ENCODE measurements at regions of chr9 and their contacts with region 1.

Region 1: GRCh38 chr9:89549031-89549644 is 51.2 kb upstream of the SEMA4D start:
- DNase-seq: peak; percentile 58 to 82
- ATAC-seq: peak; percentile 96 to 99
- H3K4me3 ChIP-seq: no peak overlapping the region
- H3K27ac ChIP-seq: no peak overlapping the region
- H3K4me1 ChIP-seq: no peaks in the 10 kb centered on the region
- CTCF ChIP-seq: peak; percentile 82
- EP300 ChIP-seq: no peak
- POLR2A ChIP-seq: no peak
- RAD21 ChIP-seq: peak; percentile 71 to 74

Region 2: DNA sequence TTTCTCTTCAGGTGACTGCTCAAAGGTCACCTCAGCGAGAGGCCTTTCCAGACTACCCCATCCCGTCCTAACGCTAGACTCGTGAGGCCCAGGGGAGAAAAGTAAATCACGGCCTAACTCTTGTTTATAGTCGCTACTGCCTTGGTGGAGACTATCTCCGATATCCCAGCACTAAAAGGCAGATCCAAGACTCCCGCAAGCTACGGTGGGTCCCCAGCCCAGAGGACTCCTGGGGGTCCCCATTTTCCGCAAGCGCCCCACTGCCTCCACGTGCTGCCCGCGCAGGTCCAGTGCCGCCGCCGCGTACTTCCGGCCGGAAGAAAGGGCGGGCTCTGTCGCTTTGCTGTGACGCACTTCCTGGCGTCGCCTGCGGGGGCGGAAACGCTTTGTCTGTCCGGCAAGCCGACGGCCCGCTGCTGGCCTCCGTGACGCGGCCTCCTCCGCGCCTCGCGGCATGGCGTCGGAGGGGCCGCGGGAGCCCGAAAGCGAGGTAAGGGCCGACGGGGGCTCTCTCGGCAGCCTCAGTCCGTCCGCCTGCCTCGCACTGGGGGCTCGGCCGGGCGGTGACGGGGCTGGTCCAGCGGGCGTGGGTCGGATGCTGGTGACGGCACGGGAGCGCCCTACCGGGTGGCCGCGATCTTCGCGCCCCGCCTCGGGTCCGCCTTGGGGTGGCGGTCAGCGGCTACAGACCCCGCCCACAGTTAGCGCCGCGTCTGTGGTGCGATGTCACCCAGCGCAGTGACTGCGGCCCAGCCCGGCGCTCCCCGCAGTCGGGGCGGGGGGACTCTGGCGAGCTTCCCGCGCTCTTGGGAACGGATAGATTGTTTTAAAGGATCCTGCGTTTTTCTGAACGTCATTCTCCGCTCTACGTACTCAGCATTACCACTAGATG is 230.8 kb before region 1 on chr9 and contains the start of gene SECISBP2:
- CTCF ChIA-PET with region 1: interaction called, 10 read pairs
- POLR2A ChIA-PET with region 1: interaction called, 7 read pairs
- DNase-seq: peak; percentile 77 to 96
- ATAC-seq: peak; percentile 94 to 95
- H3K4me3 ChIP-seq: peak within 1 kb of the TSS; percentile 55
- H3K27ac ChIP-seq: peak within 1 kb of the TSS; percentile 96 to 98
- H3K4me1 ChIP-seq: peaks cover 56% of the 10 kb centered on the region
- CTCF ChIP-seq: peak; percentile 80; the same call in 2 of the 3 replicates
- EP300 ChIP-seq: no peak; a peak in 1 of 5 replicates
- POLR2A ChIP-seq: peak; percentile 74
- RAD21 ChIP-seq: peak in 1 of 2 experiments; percentile 41; a peak in 4 of 5 replicates
- polyA plus RNA-seq, gene SECISBP2: 39.0 and 43.4 TPM in 2 replicates

Region 3: DNA sequence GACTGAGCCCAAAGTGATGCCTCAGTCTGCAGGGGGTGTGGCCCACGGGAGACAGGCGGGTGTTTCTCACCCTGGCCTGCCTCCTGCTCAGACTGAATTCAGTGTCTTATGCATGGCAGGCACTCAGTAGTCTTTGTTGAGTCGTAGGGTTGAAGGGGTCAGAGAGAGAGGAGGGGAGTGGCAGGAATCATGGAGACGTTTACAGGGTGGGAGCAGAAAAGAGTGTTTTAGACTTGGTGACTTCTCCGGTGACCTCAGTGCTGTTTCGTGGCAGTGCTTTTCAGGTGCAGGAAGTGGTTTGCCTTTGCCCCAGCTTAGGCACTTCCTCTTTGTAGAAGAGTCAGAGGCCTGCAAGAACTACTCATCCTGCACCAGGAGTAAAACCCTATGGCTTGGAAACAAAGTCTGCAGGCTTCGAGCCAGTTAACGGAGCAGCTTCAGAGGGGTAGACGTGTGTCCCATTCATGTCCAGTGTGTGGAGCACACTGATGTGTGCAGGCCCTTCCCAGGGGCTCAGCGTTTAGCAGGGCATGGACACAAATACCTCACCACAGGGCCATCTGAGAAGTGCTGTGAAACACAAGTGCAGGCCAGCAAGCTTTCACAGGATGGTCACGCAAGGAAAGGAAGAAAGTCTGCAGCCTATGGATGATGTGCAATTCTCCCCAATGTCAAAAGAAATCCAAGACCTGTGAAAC is 26.7 kb before region 1 on chr9:
- CTCF ChIA-PET with region 1: interaction called, 16 read pairs
- POLR2A ChIA-PET with region 1: no interaction called
- DNase-seq: no peak
- ATAC-seq: no peak
- H3K4me3 ChIP-seq: no peak overlapping the region
- H3K27ac ChIP-seq: no peak overlapping the region
- H3K4me1 ChIP-seq: no peaks in the 10 kb centered on the region; the same call in 2 of the 3 replicates
- CTCF ChIP-seq: no peak
- EP300 ChIP-seq: no peak
- POLR2A ChIP-seq: no peak
- RAD21 ChIP-seq: no peak

Region 4: DNA sequence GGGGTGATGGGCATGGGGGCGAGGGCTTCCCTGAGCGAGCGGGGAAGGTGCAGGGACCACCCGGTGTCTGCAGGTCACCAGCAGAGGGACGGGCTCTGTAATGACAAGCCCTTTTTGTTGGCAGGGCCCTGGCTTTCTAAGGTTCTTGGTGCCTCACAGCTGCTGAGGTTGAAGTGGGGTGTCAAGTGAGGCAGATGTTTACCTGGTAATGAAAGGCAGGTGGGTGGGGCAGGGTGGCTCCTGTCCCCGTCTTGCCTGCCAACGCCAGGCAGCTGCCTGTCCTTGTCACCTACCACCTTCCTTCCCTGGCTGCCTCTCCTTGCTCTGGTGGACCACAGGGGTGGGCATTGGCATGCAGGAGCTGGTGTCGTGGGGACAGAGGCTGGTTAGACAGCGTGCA is 10.3 kb before region 1 on chr9:
- CTCF ChIA-PET with region 1: interaction called, 26 read pairs
- POLR2A ChIA-PET with region 1: no interaction called
- DNase-seq: no peak
- ATAC-seq: no peak
- H3K4me3 ChIP-seq: no peak overlapping the region
- H3K27ac ChIP-seq: no peak overlapping the region
- H3K4me1 ChIP-seq: peaks cover 5% of the 10 kb centered on the region; the same call in 1 of the 3 replicates
- CTCF ChIP-seq: no peak
- EP300 ChIP-seq: no peak
- POLR2A ChIP-seq: no peak
- RAD21 ChIP-seq: no peak

Region 5: GRCh38 chr9:89564352-89564878 is 15.3 kb after region 1 on chr9:
- CTCF ChIA-PET with region 1: interaction called, 11 read pairs
- POLR2A ChIA-PET with region 1: no interaction called
- DNase-seq: peak in 1 of 2 experiments; percentile 48
- ATAC-seq: peak in 1 of 2 experiments; percentile 90; a peak in 4 of 6 replicates
- H3K4me3 ChIP-seq: no peak overlapping the region
- H3K27ac ChIP-seq: no peak overlapping the region
- H3K4me1 ChIP-seq: peaks cover 14% of the 10 kb centered on the region; the same call in 2 of the 3 replicates
- CTCF ChIP-seq: no peak
- EP300 ChIP-seq: no peak
- POLR2A ChIP-seq: no peak
- RAD21 ChIP-seq: no peak

Measured in A549 (cell line).